ENCODE measurements at regions of chrX and their contacts with region 1.

Region 1: GRCh38 chrX:111719426-111720210 is 38.6 kb downstream of the ALG13 start:
- DNase-seq: peak; percentile 3
- H3K4me3 Mint-ChIP-seq: no peak overlapping the region
- H3K27ac Mint-ChIP-seq: no peak overlapping the region
- H3K4me1 Mint-ChIP-seq: peaks cover 5% of the 10 kb centered on the region
- H3K27me3 Mint-ChIP-seq: peaks cover 35% of the 10 kb centered on the region
- CTCF ChIP-seq: peak; percentile 39

Region 2: GRCh38 chrX:111600341-111600740 is 119.3 kb before region 1 on chrX:
- CTCF ChIA-PET with region 1: no interaction called
- POLR2A ChIA-PET with region 1: no interaction called
- intact Hi-C with region 1: no loop called
- DNase-seq: no peak
- H3K4me3 Mint-ChIP-seq: no peak overlapping the region
- H3K27ac Mint-ChIP-seq: no peak overlapping the region
- H3K4me1 Mint-ChIP-seq: no peaks in the 10 kb centered on the region
- H3K27me3 Mint-ChIP-seq: peaks cover 76% of the 10 kb centered on the region
- CTCF ChIP-seq: no peak

Region 3: DNA sequence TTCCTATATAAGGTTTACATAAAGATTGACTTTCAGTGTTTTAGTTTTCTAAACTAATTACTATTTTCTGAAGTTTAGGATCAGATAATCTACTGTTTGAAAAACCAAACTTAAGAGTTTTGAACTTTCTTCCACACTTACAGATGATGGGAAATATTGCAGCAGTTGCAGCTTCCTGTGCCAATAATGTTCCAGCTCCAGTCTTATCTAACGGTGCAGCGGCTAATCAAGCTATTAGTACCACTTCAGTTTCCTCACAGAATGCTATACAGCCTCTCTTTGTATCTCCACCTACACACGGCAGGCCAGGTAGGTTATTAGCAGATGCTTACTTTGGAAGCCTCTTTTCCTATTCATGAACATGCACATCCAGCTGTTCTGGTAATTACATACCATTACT is 17.0 kb after region 1 on chrX:
- CTCF ChIA-PET with region 1: interaction called, 11 read pairs
- POLR2A ChIA-PET with region 1: interaction called, 4 read pairs
- intact Hi-C with region 1: no loop called
- DNase-seq: no peak
- H3K4me3 Mint-ChIP-seq: no peak overlapping the region
- H3K27ac Mint-ChIP-seq: no peak overlapping the region
- H3K4me1 Mint-ChIP-seq: no peaks in the 10 kb centered on the region
- H3K27me3 Mint-ChIP-seq: peaks cover 77% of the 10 kb centered on the region
- CTCF ChIP-seq: no peak

Region 4: DNA sequence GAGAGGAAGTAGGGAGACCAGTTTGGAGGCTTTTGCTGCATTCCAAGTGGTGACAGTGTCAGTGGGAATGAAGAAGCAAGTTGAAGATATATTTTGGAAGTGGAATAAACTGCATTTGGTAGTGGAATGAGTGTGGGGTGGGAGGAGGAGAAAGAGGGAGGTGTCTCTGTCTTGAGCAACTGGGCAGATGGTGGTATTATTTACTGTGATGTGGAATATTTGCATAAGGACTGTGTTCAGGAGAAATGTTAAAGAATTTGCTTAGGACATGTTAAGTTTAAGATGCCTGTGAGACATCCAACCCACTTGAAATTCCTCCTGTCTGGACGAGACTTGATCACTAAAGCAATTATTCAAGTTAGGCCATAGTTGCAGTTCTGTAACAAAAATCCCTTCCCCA is 1569.9 kb after region 1 on chrX:
- CTCF ChIA-PET with region 1: no interaction called
- POLR2A ChIA-PET with region 1: no interaction called
- intact Hi-C with region 1: no loop called
- DNase-seq: no peak
- H3K4me3 Mint-ChIP-seq: no peak overlapping the region
- H3K27ac Mint-ChIP-seq: no peak overlapping the region
- H3K4me1 Mint-ChIP-seq: no peaks in the 10 kb centered on the region
- H3K27me3 Mint-ChIP-seq: peaks cover 31% of the 10 kb centered on the region
- CTCF ChIP-seq: no peak

Measured in MCF 10A (cell line).